ENCODE measurements at regions of chr14 and their contacts with region 1.

Region 1: DNA sequence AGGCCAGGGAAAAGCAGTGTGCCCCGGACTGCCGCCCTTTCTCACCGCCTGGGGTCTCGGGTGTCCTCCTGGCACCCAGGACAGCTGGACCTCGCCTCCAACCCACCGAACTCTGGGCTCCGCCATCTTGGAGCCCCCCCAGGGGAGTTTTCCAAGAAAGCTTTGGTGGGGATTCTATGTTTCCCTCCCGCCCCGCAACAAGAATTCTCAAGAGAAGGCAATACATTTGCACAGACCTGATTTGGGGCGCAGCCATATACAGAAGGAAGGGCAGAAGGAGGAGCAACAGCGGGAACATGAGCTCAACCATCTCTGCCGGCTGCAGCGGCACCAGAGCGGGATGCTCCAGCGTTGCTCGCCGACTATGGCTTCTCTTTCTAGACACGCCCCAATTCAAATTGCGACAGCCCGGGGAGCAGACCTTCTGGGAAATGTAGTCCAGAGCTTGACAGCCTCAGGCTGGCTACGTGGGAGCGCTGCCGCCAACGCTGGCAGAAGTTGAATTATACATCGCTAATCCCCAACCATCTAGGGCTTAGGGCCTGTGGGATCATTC is at the start of gene RDH11:
- DNase-seq: peak; percentile 78 to 84 (median 83)
- H3K4me3 ChIP-seq: peak within 1 kb of the TSS; percentile 83
- H3K27ac ChIP-seq: peak within 1 kb of the TSS; percentile 10 to 40
- H3K4me1 ChIP-seq: peaks cover 5% of the 10 kb centered on the region
- H3K27me3 ChIP-seq: no peaks in the 10 kb centered on the region
- CTCF ChIP-seq: no peak
- EP300 ChIP-seq: no peak
- POLR2A ChIP-seq: peak; percentile 67
- total RNA-seq, gene RDH11: 30.3 to 46.9 (median 36.6) TPM

Region 2: DNA sequence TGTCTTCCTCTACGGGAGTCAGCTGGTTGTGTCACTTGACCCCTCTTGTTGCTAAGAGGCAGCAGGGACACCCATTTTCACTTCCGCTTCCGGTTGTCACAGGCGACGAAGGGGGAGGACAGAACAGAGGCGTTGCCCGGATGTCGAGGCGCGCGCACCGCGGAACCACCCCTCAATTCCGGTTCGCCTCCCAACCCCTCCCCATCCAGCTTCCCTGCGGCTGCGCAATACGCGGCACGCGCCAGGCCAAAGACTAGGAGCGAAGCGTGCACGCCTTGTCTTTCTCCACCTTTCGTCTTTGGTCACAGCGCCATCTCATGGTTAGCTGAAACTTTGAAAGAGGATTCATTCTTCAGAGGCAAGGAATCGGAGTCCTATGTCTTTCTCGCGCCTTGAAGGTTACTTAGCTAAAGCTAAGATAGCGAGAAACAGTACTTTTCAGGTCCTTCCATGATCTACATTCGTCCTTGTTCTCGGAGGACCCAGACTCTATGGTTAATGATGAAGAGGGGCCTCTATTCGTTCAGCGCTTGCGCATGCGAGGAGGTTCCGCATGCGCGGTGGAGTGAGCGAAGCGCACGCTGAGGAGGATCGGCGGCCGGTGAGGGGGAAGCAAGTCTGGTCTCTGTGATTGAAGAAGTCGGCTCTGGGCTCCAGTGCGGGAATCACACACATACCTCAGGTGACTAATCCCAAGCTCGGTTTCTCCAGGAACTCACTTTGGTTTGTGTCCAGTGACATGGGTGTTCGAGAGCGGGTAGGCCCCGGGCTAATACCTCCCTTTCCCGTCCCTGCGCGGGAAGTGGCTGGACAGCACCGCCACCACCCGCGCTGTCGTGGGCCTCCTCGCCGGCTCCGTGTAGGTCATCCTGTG is 335.5 kb before region 1 on chr14 and contains the starts of genes ATP6V1D and EIF2S1:
- intact Hi-C with region 1: no loop called
- DNase-seq: peak; percentile 99
- H3K4me3 ChIP-seq: peak within 1 kb of the TSS; percentile 63
- H3K27ac ChIP-seq: peak within 1 kb of the TSS; percentile 86 to 92
- H3K4me1 ChIP-seq: peaks cover 8% of the 10 kb centered on the region
- H3K27me3 ChIP-seq: no peaks in the 10 kb centered on the region
- CTCF ChIP-seq: peak; percentile 92 to 99 (median 98)
- EP300 ChIP-seq: no peak
- POLR2A ChIP-seq: peak; percentile 80
- total RNA-seq, gene ATP6V1D: 30.7 to 54.1 (median 35.4) TPM
- total RNA-seq, gene EIF2S1: 28.0 to 63.8 (median 49.1) TPM

Region 3: GRCh38 chr14:67717048-67717447 is 21.6 kb after region 1 on chr14:
- intact Hi-C with region 1: loop called in 1 of 4 experiments (anchors 1 kb)
- DNase-seq: no peak
- H3K4me3 ChIP-seq: no peak overlapping the region
- H3K27ac ChIP-seq: no peak overlapping the region
- H3K4me1 ChIP-seq: no peaks in the 10 kb centered on the region
- H3K27me3 ChIP-seq: no peaks in the 10 kb centered on the region
- CTCF ChIP-seq: no peak
- EP300 ChIP-seq: no peak
- POLR2A ChIP-seq: no peak

Region 4: DNA sequence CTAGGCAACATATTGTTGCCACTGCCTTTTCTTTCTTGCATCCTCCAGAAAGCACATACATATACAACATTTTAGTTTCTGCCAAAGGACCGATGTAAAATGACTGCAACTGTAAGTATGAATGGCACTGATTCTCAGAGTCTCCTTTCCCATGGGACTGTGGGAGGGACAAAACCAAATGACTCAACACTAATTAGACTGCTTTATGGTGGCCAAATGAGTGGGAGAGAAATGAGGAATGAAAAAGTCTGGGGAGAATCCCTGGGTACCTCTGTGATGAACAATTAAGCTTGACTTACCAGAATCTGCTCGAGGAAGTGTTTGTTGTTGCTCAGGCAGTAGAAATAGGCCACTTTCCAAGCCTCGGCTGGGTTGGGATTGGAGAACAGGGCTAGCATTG is 110.8 kb after region 1 on chr14:
- intact Hi-C with region 1: no loop called
- DNase-seq: no peak
- H3K4me3 ChIP-seq: no peak overlapping the region
- H3K27ac ChIP-seq: no peak overlapping the region
- H3K4me1 ChIP-seq: no peaks in the 10 kb centered on the region
- H3K27me3 ChIP-seq: no peaks in the 10 kb centered on the region
- CTCF ChIP-seq: no peak
- EP300 ChIP-seq: no peak
- POLR2A ChIP-seq: no peak